ENCODE measurements at regions of chr5 and their contacts with region 1.

Region 1: GRCh38 chr5:167950126-167950721 is 341.2 kb upstream of the WWC1 start:
- DNase-seq: no peak
- H3K4me3 ChIP-seq: no peak overlapping the region
- H3K27ac ChIP-seq: no peak overlapping the region
- H3K4me1 ChIP-seq: peaks cover 18% of the 10 kb centered on the region
- H3K27me3 ChIP-seq: no peaks in the 10 kb centered on the region
- CTCF ChIP-seq: no peak
- EP300 ChIP-seq: no peak
- POLR2A ChIP-seq: no peak

Region 2: DNA sequence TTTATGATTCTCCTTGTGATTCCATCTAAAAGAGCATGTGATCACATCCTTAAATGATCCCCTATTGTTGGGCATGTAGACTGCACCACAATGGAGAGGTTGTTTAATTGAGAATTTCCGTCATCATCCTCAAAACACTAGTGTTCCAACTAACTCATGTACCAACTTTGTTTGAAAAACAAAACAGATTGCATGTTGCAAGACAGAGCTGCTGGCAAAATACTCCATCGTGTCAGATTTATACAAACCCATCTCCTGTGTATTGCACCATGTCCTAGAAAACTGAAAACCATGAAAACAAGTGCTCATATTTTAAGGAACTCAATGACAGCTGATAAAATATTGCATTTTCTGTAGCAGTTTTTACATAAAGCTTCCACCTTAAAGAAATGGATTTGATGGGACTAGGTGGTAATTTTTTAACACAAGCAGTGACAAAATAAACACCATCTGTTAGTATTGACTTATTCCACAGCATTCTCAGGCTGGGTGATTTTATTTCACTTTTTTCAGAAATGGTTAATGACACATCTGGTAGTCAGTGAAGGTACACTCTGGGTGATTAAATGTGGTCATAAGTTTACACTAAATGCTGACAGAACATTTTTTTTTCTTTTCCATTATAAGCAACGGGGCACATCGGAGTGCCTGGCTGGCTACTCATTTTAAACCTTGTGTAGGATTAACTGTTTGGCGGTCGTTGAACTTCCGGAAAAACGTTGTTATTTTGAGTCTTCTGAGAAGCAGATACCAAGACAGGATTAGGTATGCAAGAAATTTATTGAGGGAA is 261.7 kb before region 1 on chr5:
- intact Hi-C with region 1: no loop called
- DNase-seq: no peak
- H3K4me3 ChIP-seq: no peak overlapping the region
- H3K27ac ChIP-seq: no peak overlapping the region
- H3K4me1 ChIP-seq: no peaks in the 10 kb centered on the region
- H3K27me3 ChIP-seq: no peaks in the 10 kb centered on the region
- CTCF ChIP-seq: no peak
- EP300 ChIP-seq: no peak
- POLR2A ChIP-seq: no peak

Region 3: GRCh38 chr5:167969998-167970397 is 19.8 kb after region 1 on chr5:
- intact Hi-C with region 1: loop called in 1 of 4 experiments (anchors 2 kb)
- DNase-seq: no peak
- H3K4me3 ChIP-seq: no peak overlapping the region
- H3K27ac ChIP-seq: no peak overlapping the region
- H3K4me1 ChIP-seq: no peaks in the 10 kb centered on the region
- H3K27me3 ChIP-seq: no peaks in the 10 kb centered on the region
- CTCF ChIP-seq: no peak
- EP300 ChIP-seq: no peak
- POLR2A ChIP-seq: no peak

Measured in ovary (tissue), 10 donors.